ENCODE measurements at regions of chr1 and their contacts with region 1.

Region 1: DNA sequence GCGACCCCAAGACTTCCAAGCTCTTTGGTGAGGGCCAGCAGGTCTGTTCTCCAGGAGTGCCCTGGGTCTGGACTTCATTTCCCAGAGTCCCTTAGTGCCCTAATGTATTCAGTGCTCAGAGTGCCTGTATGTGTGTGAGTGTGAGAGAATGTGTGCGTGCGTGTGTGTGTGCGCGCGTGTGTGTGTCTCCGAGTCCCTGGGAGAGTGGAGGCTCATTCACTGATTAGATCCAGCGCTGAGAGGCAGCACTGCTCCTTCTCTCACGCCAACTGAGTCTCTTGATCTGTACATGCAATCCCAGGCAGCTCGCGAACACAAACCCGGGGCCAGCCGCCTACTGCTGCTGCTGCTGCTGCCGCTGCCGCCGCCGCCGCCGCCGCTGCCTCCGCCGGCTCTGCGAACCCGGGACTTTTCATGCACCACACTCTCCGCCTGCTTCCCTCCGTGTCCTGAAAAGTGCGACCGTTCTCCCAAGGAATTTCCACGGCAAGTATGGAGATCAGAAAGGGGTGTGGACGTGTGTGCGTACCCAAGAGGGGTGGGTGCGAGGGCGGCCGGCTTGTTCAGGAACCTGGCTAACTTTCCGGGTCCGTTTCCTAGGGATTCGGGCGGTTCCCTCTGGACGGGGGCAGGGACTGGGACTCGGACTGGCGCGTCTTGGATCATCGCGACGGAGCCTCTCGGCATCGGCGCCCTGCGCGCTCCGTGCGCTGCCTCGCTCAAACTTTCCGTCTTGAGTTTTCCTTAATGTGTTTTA is at the start of gene RNF220:
- DNase-seq: peak; percentile 78 to 98 (median 92)

Region 2: DNA sequence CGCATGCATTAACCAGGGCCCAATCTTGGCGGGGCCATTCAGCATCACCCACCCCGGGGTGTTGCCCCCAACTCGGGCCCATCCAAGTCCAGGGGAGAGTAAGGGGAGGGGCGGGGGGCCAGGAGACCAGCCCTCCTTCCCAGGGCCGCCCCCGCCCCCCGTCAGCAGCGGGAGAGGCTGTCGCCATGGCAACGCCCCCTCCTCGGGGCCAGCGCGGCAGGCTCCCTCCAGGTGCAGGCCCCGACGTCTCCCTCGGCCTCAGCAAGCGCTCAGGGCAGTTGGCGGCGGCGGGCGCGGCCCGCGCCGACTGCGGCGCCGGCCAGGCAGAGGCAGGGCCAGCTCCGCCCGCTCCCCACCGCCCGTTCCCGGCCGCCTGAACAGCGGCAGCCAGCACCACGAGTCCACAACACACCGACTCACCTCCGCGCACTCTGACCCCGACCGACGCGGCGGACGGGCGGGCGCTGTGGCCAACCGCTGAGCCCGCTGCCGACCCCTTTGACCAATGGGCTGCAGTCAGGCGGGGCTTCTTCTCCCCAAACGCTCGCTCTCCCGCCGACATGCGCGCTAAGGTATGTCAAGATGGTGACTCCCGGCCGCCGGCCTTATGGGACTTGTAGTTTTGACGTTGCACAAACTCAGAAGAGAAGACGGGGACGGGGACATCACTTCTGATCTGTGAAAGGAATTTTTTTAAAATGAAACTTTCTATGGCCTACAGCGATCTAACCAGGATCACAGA is 50.2 kb before region 1 on chr1 and contains the start of gene ERI3:
- intact Hi-C with region 1: loop called (anchors 2 kb)
- DNase-seq: peak; percentile 97 to 99 (median 98)

Region 3: GRCh38 chr1:44500181-44501046 is 95.2 kb after region 1 on chr1:
- intact Hi-C with region 1: loop called (anchors 5 kb)
- DNase-seq: peak in 39 of 42 donors; percentile 30 to 89 (median 72)

Region 4: GRCh38 chr1:44594871-44595746 is 189.9 kb after region 1 on chr1:
- intact Hi-C with region 1: loop called (anchors 10 kb)
- DNase-seq: peak; percentile 68 to 97 (median 88)

Region 5: DNA sequence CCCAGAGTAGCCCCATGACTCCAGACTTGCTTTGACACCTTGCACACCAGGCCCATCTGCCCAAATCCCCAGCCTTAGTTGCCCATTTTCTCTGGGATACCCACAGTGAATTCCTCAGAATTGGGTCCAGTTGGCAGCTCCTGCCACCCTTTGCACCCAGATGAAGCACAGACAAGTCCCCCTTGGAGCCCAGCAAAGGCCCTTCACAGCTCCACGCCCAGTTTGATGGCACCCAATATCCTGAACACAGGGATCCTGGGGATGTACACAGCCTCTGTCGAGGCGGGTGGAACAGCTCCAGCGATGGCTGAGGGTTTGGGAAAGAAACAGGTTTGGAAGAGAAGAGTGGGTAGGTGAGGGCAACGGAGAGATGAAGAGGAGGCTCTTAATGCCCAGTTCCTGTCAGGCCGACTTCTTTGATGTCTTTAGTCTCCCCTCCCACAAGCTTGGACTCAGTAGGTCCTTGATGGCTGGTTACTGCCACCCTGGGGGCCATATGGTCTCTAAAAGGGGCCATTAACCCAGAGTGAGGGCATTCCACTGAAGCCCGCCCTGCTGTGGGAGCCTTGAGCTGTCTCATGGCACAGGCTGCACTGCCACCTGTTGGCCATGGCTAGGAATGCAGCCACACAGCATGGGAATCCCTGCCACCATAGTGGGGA is 247.4 kb after region 1 on chr1:
- intact Hi-C with region 1: loop called (anchors 5 kb)
- DNase-seq: peak; percentile 67 to 97 (median 91)

Region 6: GRCh38 chr1:44947063-44947773 is 542.0 kb after region 1 on chr1:
- intact Hi-C with region 1: no loop called
- DNase-seq: peak in 2 of 42 donors; percentile 3 to 15

Measured in head of caudate nucleus (tissue), 42 donors.